ENCODE measurements at regions of chr11 and their contacts with region 1.

Region 1: DNA sequence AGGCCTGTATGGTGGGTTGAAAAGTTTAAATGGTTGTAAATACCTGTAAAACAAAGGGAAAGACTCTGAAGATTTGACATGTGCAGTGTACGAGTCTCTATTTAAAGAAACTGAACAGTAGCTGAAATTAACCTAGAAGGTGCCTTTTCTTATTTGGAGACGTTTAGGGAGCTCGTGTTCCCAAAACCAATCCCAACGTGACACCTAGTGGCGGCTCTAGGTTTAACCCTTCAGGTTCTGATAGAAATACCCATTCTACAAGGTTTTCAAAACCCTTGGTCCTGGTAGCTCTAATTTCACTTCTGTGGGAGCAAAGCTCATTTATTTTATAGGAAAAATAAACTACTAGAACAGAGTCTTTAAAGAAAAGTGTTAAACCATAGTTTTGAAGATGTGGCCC is 258.3 kb downstream of the LRRC4C start:
- DNase-seq: no peak
- ATAC-seq: peak; percentile 68
- H3K4me3 ChIP-seq: no peak overlapping the region
- H3K27ac ChIP-seq: no peak overlapping the region
- H3K4me1 ChIP-seq: no peaks in the 10 kb centered on the region
- H3K27me3 ChIP-seq: no peaks in the 10 kb centered on the region
- CTCF ChIP-seq: peak; percentile 38 to 54 (median 42); a peak in 5 of 6 replicates
- EP300 ChIP-seq: no peak
- POLR2A ChIP-seq: no peak
- RAD21 ChIP-seq: peak; percentile 71

Region 2: GRCh38 chr11:40306938-40307548 is 894.1 kb before region 1 on chr11:
- CTCF ChIA-PET with region 1: interaction called, 18 read pairs
- POLR2A ChIA-PET with region 1: no interaction called
- RAD21 ChIA-PET with region 1: interaction called, 10 read pairs
- SMC1A ChIA-PET with region 1: interaction called, 7 read pairs
- in situ Hi-C with region 1: loop called (anchors 10 kb)
- intact Hi-C with region 1: loop called (anchors 1 kb)
- DNase-seq: no peak
- ATAC-seq: peak; percentile 88
- H3K4me3 ChIP-seq: no peak overlapping the region
- H3K27ac ChIP-seq: no peak overlapping the region
- H3K4me1 ChIP-seq: no peaks in the 10 kb centered on the region
- H3K27me3 ChIP-seq: no peaks in the 10 kb centered on the region
- CTCF ChIP-seq: peak; percentile 45 to 65 (median 54)
- EP300 ChIP-seq: no peak
- POLR2A ChIP-seq: no peak
- RAD21 ChIP-seq: peak; percentile 57

Region 3: GRCh38 chr11:40722179-40722795 is 478.9 kb before region 1 on chr11:
- CTCF ChIA-PET with region 1: interaction called, 6 read pairs
- POLR2A ChIA-PET with region 1: no interaction called
- RAD21 ChIA-PET with region 1: interaction called, 3 read pairs
- SMC1A ChIA-PET with region 1: interaction called, 7 read pairs
- in situ Hi-C with region 1: no loop called
- intact Hi-C with region 1: loop called (anchors 2 kb)
- DNase-seq: no peak
- ATAC-seq: peak; percentile 91
- H3K4me3 ChIP-seq: no peak overlapping the region
- H3K27ac ChIP-seq: no peak overlapping the region
- H3K4me1 ChIP-seq: no peaks in the 10 kb centered on the region
- H3K27me3 ChIP-seq: no peaks in the 10 kb centered on the region
- CTCF ChIP-seq: peak; percentile 59 to 83 (median 61)
- EP300 ChIP-seq: no peak
- POLR2A ChIP-seq: no peak
- RAD21 ChIP-seq: peak; percentile 34; the same call in 1 of the 2 replicates

Region 4: DNA sequence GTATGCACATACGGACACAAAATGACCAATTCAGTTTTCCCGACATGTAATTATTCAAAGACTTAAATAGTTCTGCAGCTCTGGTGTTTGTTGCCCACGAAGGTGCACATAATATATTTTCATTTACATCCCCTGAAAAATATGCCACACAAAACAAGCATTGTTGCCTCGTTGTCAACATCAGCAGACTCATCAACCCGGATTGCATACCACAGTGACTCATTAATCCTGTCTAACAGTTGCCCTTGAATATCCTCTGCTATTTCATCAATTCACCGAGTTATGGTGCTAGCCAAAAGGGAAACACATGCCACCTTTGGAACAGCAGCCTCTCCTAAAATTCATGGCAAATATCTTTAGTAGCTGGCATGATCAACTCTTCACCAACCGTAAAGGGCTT is 323.9 kb before region 1 on chr11:
- CTCF ChIA-PET with region 1: interaction called, 3 read pairs
- POLR2A ChIA-PET with region 1: no interaction called
- RAD21 ChIA-PET with region 1: no interaction called
- SMC1A ChIA-PET with region 1: interaction called, 3 read pairs
- in situ Hi-C with region 1: no loop called
- intact Hi-C with region 1: loop called (anchors 5 kb)
- DNase-seq: no peak
- ATAC-seq: no peak
- H3K4me3 ChIP-seq: no peak overlapping the region
- H3K27ac ChIP-seq: no peak overlapping the region
- H3K4me1 ChIP-seq: no peaks in the 10 kb centered on the region
- H3K27me3 ChIP-seq: no peaks in the 10 kb centered on the region
- CTCF ChIP-seq: no peak
- EP300 ChIP-seq: no peak
- POLR2A ChIP-seq: no peak
- RAD21 ChIP-seq: no peak

Region 5: DNA sequence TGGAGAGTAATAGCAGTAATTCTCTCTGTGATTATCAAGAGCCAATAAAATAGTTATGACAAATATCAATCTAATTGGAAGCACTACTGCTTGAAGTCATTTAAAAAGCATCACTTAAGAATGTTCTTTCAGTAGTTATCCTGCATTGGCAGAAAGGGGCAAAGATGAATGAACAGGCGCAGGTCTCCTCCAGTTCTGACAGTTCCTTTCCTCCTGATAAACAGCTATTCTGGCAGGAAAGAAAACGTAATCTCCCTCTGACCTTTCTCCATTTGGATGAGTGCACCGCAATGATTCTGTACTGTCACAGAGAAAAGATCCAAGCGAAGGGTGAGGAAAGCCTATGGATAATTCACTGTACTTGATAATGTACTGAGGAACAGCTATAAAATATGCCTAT is 263.2 kb before region 1 on chr11:
- CTCF ChIA-PET with region 1: no interaction called
- POLR2A ChIA-PET with region 1: no interaction called
- RAD21 ChIA-PET with region 1: no interaction called
- SMC1A ChIA-PET with region 1: no interaction called
- in situ Hi-C with region 1: no loop called
- intact Hi-C with region 1: loop called (anchors 10 kb)
- DNase-seq: no peak
- ATAC-seq: no peak
- H3K4me3 ChIP-seq: no peak overlapping the region
- H3K27ac ChIP-seq: no peak overlapping the region
- H3K4me1 ChIP-seq: no peaks in the 10 kb centered on the region
- H3K27me3 ChIP-seq: no peaks in the 10 kb centered on the region
- CTCF ChIP-seq: no peak
- EP300 ChIP-seq: no peak
- POLR2A ChIP-seq: no peak
- RAD21 ChIP-seq: no peak

Region 6: DNA sequence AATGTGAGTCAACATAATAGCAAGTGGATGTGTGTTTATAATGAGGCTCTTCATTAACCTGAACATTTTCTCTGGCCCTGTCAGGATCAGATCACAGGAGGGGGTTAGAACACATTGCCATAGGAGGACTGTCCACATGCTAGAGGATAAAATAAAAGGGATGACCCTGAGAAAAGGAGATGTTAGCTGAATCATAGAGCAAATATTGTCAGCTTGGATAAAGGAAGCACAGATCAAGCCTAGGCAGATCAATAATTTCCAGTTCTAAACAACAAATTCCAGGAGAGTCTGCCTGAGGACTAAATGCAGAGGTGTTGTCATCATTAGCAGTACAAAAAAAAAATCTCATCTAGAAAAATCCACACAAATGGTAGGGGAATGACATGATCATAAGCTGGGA is 79.6 kb before region 1 on chr11:
- CTCF ChIA-PET with region 1: no interaction called
- POLR2A ChIA-PET with region 1: no interaction called
- RAD21 ChIA-PET with region 1: no interaction called
- SMC1A ChIA-PET with region 1: no interaction called
- in situ Hi-C with region 1: no loop called
- intact Hi-C with region 1: no loop called
- DNase-seq: no peak
- ATAC-seq: no peak
- H3K4me3 ChIP-seq: no peak overlapping the region
- H3K27ac ChIP-seq: no peak overlapping the region
- H3K4me1 ChIP-seq: no peaks in the 10 kb centered on the region
- H3K27me3 ChIP-seq: no peaks in the 10 kb centered on the region
- CTCF ChIP-seq: no peak
- EP300 ChIP-seq: no peak
- POLR2A ChIP-seq: no peak
- RAD21 ChIP-seq: no peak

Measured in GM12878 (cell line).